Naive thymus-derived CD4-positive, alpha-beta T cell (primary cell): ENCODE measurements at regions of chr5 and their contacts with region 1.

Region 1: DNA sequence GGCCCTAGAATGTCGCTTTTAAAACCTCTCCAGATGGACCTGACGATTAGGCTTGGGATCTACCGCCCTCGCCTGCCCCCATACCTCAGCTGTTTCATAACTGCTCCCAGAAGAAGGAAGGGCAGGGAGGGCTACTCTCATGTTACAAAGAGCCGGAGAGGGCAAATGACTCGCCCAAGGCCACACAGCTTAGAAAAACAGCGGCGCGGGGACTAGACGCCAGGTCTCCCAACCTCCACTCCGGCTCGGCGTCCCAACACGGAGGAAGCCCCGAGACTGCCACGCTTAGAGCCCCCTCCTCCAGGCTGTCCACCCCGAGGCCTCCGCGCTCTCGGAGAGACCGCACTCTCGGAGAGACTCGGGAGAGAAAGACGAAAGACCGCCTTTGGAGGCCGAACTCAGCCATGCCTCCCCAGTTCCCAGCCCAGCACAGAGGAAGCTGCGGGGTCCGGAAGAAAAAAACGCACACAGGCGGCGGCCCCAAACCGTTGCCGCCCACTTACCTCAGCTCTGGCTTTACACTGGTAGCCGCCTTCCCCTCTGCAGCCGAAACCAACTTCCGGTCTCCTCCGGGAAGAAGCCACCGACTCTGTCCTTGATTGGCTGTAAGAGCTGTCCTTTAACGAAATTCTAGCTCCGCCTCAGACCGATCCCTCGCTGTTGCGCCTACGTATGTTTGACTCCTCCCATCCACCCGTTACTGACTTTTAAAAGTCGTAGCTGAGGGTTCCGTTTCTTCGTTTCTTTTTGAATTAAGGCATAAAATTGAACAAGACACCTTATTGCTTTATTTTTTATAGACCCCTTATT is at the start of gene MED7:
- DNase-seq: peak; percentile 66 to 98 (median 96)
- ATAC-seq: peak; percentile 98
- H3K4me3 ChIP-seq: peak within 1 kb of the TSS; percentile 82
- H3K4me3 Mint-ChIP-seq: peak within 1 kb of the TSS; percentile 92 to 99 (median 96)
- H3K27ac ChIP-seq: peak within 1 kb of the TSS; percentile 94
- H3K27ac Mint-ChIP-seq: peak within 1 kb of the TSS; percentile 97 to 100 (median 99)
- H3K4me1 ChIP-seq: peaks cover 11 to 22% of the 10 kb centered on the region in 2 donors
- H3K4me1 Mint-ChIP-seq: peaks cover 11 to 64% (median 48%) of the 10 kb centered on the region in 7 donors
- H3K27me3 ChIP-seq: no peaks in the 10 kb centered on the region
- H3K27me3 Mint-ChIP-seq: no peaks in the 10 kb centered on the region
- total RNA-seq, gene MED7: 5.8 to 18.5 (median 14.2) TPM

Region 2: DNA sequence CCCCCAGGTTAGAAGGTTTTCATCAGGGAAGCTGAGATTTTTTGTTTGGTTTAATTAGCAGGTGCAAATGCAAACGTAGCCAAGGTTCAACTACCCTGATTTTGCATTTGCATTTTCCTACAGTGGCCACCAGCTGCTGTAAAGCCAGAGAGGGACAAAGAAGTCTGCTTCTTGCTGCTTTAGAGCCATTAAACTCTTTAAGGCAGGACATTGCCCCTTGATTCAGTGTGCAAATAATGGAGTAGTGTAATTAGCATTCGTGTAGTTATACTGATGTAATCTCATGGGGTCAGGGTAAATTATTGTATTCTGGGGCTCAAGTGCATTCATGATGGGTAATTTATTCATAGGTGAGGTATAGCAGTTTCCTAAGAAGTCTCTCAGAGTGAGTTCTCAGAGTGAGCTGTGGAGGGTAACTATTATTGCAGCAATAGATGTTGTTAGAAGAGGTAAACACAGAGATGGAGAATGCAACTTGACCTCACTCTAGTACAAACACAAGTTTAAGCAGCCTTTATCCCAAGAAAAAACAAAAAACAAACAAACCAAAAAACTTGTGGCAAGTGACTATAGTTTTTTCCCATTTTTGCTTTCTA is 1602.4 kb before region 1 on chr5:
- CTCF ChIA-PET with region 1: no interaction called
- POLR2A ChIA-PET with region 1: no interaction called
- intact Hi-C with region 1: no loop called
- DNase-seq: no peak
- ATAC-seq: no peak
- H3K4me3 ChIP-seq: no peak overlapping the region
- H3K4me3 Mint-ChIP-seq: no peak overlapping the region
- H3K27ac ChIP-seq: no peak overlapping the region
- H3K27ac Mint-ChIP-seq: no peak overlapping the region
- H3K4me1 ChIP-seq: no peaks in the 10 kb centered on the region
- H3K4me1 Mint-ChIP-seq: no peaks in the 10 kb centered on the region
- H3K27me3 ChIP-seq: peaks cover 0 to 7% of the 10 kb centered on the region in 2 donors
- H3K27me3 Mint-ChIP-seq: peaks cover 0 to 4% (median 0%) of the 10 kb centered on the region in 5 donors

Region 3: GRCh38 chr5:157049605-157050004 is 92.9 kb before region 1 on chr5:
- CTCF ChIA-PET with region 1: no interaction called
- POLR2A ChIA-PET with region 1: interaction called, 7 read pairs
- intact Hi-C with region 1: loop called in 1 of 2 experiments (anchors 1 kb)
- DNase-seq: no peak
- ATAC-seq: no peak
- H3K4me3 ChIP-seq: peak overlapping the region; percentile 49
- H3K4me3 Mint-ChIP-seq: peak overlapping the region; percentile 81 to 92 (median 88)
- H3K27ac ChIP-seq: peak overlapping the region; percentile 53
- H3K27ac Mint-ChIP-seq: peak overlapping the region; percentile 87 to 97 (median 93)
- H3K4me1 ChIP-seq: peaks cover 0 to 28% of the 10 kb centered on the region in 2 donors
- H3K4me1 Mint-ChIP-seq: peaks cover 16 to 79% (median 66%) of the 10 kb centered on the region in 7 donors
- H3K27me3 ChIP-seq: no peaks in the 10 kb centered on the region
- H3K27me3 Mint-ChIP-seq: no peaks in the 10 kb centered on the region

Region 4: GRCh38 chr5:157172403-157172802 is 29.9 kb after region 1 on chr5:
- CTCF ChIA-PET with region 1: no interaction called
- POLR2A ChIA-PET with region 1: interaction called, 10 read pairs
- intact Hi-C with region 1: loop called in 1 of 2 experiments (anchors 1 kb)
- DNase-seq: peak; percentile 21 to 90 (median 75)
- ATAC-seq: peak; percentile 98
- H3K4me3 ChIP-seq: peak overlapping the region; percentile 33
- H3K4me3 Mint-ChIP-seq: peak overlapping the region; percentile 49 to 82 (median 73)
- H3K27ac ChIP-seq: peak overlapping the region; percentile 80
- H3K27ac Mint-ChIP-seq: peak overlapping the region; percentile 83 to 96 (median 94)
- H3K4me1 ChIP-seq: peaks cover 20 to 35% of the 10 kb centered on the region in 2 donors
- H3K4me1 Mint-ChIP-seq: peaks cover 33 to 91% (median 73%) of the 10 kb centered on the region in 7 donors
- H3K27me3 ChIP-seq: no peaks in the 10 kb centered on the region
- H3K27me3 Mint-ChIP-seq: no peaks in the 10 kb centered on the region

Region 5: DNA sequence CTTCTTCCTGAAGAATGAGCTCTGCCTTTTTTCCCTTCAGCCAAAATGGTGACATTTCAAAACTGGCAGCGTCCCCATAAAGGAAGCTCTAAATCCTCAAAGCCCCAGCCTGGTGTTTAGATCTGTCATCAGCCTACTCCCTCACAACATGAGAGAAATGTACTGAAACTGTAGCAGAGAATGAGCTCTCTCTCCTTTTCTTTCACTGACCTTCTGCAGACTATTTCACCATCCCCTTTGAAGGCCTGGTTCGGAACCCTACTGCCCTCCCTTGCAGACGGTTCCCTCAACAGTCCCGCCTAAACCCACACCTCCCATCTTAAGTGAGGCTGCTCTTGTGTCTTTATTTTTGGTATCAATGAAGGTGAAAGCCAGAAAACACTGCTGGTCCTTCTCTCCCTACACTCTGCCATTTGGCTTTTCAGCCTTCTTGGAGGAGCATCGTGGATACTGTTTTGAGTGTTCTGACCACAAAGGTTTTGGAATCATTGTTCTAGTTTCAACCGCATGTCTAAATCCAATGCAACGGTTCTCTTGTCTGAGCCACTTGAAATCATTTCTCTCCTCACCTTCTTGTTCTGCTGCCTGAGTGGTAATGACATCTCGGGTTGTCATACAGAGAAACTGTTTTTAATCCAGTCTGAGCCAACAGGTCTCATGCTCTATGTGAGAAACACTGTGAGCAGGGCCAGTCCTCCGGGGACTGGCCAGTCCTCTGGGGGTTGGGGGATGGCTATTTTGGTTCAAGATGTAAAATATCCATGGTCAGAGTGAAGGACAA is 77.2 kb after region 1 on chr5:
- CTCF ChIA-PET with region 1: interaction called, 20 read pairs
- POLR2A ChIA-PET with region 1: interaction called, 19 read pairs
- intact Hi-C with region 1: no loop called
- DNase-seq: peak in 1 of 9 donors; percentile 54
- ATAC-seq: no peak
- H3K4me3 ChIP-seq: no peak overlapping the region
- H3K4me3 Mint-ChIP-seq: peak overlapping the region in 9 of 10 donors; percentile 39 to 89 (median 65)
- H3K27ac ChIP-seq: peak overlapping the region; percentile 63
- H3K27ac Mint-ChIP-seq: peak overlapping the region; percentile 89 to 98 (median 94)
- H3K4me1 ChIP-seq: peaks cover 82 to 87% of the 10 kb centered on the region in 2 donors
- H3K4me1 Mint-ChIP-seq: peaks cover 54 to 94% (median 85%) of the 10 kb centered on the region in 7 donors
- H3K27me3 ChIP-seq: no peaks in the 10 kb centered on the region
- H3K27me3 Mint-ChIP-seq: no peaks in the 10 kb centered on the region

Region 6: DNA sequence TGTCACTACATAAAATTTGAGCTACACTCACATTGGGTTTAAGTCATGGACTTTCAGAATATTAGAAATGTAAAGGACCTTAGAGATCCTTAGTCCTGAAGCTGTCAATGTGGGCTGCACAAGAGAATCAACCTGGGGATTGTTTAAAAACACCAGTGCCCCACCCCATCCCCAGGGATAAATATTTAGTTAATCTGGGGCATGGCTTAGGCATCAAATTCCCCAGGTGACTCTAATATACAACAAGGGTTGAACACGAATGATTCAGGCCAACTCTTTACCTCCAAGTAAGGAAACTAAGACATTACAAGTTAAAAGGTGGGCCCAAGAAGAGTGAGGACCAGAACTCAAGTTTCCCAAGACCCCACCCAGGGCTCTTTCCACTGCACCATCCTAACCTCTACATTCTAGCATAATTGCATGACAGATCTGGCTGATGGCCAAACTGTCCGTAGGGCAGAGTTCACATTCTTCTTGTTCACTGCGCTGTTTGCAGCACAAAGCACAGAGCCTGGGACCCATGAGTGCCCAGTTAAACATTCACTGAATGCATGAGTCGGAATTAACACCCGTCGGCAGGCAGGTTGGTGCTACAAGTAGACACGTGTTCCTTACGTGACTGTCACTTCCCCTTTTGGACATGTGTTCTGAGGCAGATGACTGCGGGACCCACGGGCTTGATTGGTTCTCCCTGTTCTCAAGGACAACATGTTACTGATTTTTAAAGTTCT is 148.6 kb after region 1 on chr5:
- CTCF ChIA-PET with region 1: no interaction called
- POLR2A ChIA-PET with region 1: interaction called, 11 read pairs
- intact Hi-C with region 1: no loop called
- DNase-seq: no peak
- ATAC-seq: peak; percentile 68
- H3K4me3 ChIP-seq: no peak overlapping the region
- H3K4me3 Mint-ChIP-seq: peak overlapping the region in 2 of 10 donors; percentile 13 to 67
- H3K27ac ChIP-seq: peak overlapping the region; percentile 42
- H3K27ac Mint-ChIP-seq: peak overlapping the region; percentile 63 to 95 (median 89)
- H3K4me1 ChIP-seq: peaks cover 0 to 54% of the 10 kb centered on the region in 2 donors
- H3K4me1 Mint-ChIP-seq: peaks cover 38 to 93% (median 66%) of the 10 kb centered on the region in 7 donors
- H3K27me3 ChIP-seq: no peaks in the 10 kb centered on the region
- H3K27me3 Mint-ChIP-seq: no peaks in the 10 kb centered on the region

Region 7: GRCh38 chr5:157651623-157652549 is 509.4 kb after region 1 on chr5 and contains the start of gene SOX30:
- CTCF ChIA-PET with region 1: no interaction called
- POLR2A ChIA-PET with region 1: no interaction called
- intact Hi-C with region 1: loop called in 1 of 2 experiments (anchors 5 kb)
- DNase-seq: peak; percentile 68 to 87 (median 81)
- ATAC-seq: peak; percentile 98
- H3K4me3 ChIP-seq: peak within 1 kb of the TSS; percentile 54
- H3K4me3 Mint-ChIP-seq: peak within 1 kb of the TSS; percentile 65 to 88 (median 84)
- H3K27ac ChIP-seq: peak within 1 kb of the TSS; percentile 55
- H3K27ac Mint-ChIP-seq: peak within 1 kb of the TSS; percentile 59 to 91 (median 82)
- H3K4me1 ChIP-seq: peaks cover 0 to 4% of the 10 kb centered on the region in 2 donors
- H3K4me1 Mint-ChIP-seq: peaks cover 9 to 19% (median 16%) of the 10 kb centered on the region in 7 donors
- H3K27me3 ChIP-seq: no peaks in the 10 kb centered on the region
- H3K27me3 Mint-ChIP-seq: peaks cover 0 to 3% (median 0%) of the 10 kb centered on the region in 5 donors
- total RNA-seq, gene SOX30: 0.36 TPM in 1 of 5 experiments, not detected in the others